Activated CD8-positive, alpha-beta T cell treated with anti-CD3 and anti-CD28 coated beads for 36 hours (primary cell): ENCODE measurements at regions of chr5 and their contacts with region 1.

Region 1: DNA sequence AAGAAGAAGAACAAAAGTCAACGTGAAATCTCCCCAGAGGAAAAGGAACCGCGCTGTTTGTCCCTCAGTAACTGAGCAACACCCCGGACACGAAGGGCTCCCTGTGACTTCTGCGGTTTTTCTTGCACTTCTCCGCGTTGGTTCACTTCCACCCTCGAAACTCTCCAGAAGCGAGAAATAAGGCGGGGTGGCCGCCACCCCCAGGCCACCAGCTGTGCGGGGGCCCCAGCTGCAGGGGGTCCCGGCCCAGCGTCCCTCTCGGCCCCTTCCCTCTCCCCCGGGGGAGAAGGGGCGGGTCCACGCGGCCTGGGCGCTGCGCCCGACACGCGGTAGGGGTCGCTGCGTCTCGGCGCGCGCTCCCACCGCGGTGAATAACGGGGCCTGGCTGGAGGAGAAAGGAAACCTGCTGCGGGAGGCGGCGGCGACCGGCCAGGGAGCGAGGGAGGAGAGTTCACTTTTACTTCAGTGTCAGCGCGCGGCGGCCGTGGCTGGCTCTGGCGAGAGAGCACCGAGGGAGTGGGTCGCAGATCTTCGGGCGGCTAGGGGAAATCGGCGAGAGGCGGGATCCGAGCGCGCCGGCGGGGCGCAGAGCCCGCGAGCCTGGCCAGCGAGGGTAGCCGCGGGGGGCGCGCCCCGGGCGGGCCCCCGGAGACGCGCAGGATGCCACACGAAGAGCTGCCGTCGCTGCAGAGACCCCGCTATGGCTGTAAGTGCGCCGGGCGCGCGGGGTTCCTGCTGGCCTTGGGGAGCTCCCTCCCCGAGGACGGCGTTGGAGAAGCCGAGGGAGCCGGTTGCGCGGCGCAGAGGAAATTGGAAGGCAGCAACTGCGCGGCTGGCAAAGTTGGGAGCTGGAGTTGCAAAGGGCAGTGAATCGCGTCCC is at the start of gene IQGAP2:
- DNase-seq: peak; percentile 84
- ATAC-seq: peak; percentile 63
- H3K4me3 Mint-ChIP-seq: peak within 1 kb of the TSS; percentile 87
- H3K27ac Mint-ChIP-seq: peak within 1 kb of the TSS; percentile 98
- H3K4me1 Mint-ChIP-seq: peaks cover 51% of the 10 kb centered on the region
- H3K27me3 Mint-ChIP-seq: no peaks in the 10 kb centered on the region
- CTCF ChIP-seq: peak; percentile 87
- total RNA-seq, gene IQGAP2: 37.7 to 39.1 TPM

Region 2: DNA sequence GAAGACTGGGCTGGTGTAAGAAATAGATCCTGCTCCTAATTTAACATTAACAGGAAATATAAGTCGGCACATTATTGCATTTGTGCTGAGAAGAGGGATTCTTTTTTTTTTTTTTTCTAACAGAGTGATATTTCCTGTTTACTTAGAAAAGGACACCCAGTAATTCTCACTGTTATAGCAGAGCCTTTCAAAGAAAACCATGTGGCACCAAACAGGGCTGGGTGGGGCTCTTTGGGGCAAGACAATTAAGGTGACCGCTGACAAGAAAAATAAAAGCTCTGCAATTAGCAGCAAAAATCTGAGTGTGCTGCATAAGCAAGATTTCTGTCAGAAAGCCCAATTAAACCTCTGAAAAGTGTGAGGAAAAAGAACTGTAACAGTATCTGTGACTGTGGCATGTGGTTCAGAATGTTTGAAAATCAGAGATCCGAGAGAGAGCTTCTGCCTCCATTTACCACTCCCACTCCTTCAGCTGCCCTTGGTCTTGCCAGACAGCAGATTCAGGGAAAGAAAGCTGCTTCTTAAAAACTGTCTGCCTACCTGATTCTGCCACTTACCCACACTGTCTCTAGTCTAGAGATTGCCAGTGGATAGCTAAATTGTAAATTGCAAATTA is 77.1 kb before region 1 on chr5:
- CTCF ChIA-PET with region 1: interaction called, 10 read pairs
- POLR2A ChIA-PET with region 1: interaction called, 7 read pairs
- intact Hi-C with region 1: loop called (anchors 5 kb)
- DNase-seq: peak; percentile 62
- ATAC-seq: peak; percentile 94
- H3K4me3 Mint-ChIP-seq: peak overlapping the region; percentile 34
- H3K27ac Mint-ChIP-seq: peak overlapping the region; percentile 90
- H3K4me1 Mint-ChIP-seq: peaks cover 48% of the 10 kb centered on the region
- H3K27me3 Mint-ChIP-seq: no peaks in the 10 kb centered on the region
- CTCF ChIP-seq: no peak

Region 3: DNA sequence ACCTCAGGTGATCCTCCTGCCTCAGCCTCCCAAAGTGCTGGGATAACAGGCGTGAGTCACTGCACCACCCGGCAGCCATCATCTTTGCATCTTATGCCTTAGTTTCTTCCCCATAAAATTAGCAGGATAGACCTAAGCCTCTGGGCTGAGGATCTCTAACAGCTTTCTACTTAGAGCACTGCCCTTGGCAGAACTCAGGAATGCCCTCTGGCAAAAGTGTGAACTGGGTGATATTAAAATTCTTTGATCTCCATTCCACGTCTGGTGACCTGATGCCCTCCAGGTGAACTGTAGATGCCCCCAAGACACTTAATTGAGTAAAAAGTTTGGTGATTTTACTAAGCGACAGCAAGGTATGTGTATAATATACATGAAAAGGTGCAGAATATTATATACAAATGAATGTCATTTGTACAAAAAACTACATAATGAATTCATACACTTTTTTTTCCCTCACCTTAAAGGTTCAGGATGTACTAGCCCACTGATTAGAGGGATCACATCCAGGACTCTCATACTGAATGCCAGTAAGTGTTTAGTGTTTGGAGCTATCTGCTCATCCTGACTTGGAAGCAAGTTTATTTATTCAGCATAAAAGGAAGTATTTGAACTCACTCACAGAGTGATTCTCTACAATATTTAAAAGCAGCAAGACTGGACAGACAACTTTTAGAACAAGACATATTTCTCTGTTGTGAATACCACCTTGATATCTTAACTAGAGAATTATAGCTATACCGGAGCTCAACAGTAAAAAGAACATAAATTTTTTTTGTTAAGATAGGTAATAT is 15.1 kb before region 1 on chr5:
- CTCF ChIA-PET with region 1: interaction called, 4 read pairs
- POLR2A ChIA-PET with region 1: interaction called, 16 read pairs
- intact Hi-C with region 1: no loop called
- DNase-seq: no peak
- ATAC-seq: no peak
- H3K4me3 Mint-ChIP-seq: no peak overlapping the region
- H3K27ac Mint-ChIP-seq: no peak overlapping the region
- H3K4me1 Mint-ChIP-seq: peaks cover 47% of the 10 kb centered on the region
- H3K27me3 Mint-ChIP-seq: no peaks in the 10 kb centered on the region
- CTCF ChIP-seq: no peak

Region 4: DNA sequence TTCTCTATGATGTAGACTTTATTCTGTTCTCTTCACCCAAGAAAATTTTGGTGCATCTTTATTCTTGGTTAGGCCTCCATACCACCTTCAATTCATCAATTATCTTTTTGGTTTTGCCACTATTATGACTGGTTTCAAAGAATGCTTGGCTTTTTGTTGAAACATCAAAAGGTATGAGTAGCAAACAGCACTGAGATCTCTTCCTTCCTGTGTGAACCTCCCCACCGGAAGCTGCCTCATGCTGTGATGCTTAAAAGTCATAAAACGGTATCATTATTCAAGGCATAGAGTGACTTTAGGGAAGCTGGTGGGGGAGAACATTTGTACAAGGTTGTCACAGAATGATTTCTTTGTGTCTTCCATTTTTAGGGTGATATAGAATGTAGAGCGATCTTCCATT is 70.5 kb after region 1 on chr5:
- CTCF ChIA-PET with region 1: interaction called, 5 read pairs
- POLR2A ChIA-PET with region 1: interaction called, 12 read pairs
- intact Hi-C with region 1: loop called (anchors 2 kb)
- DNase-seq: peak; percentile 85
- ATAC-seq: peak; percentile 89
- H3K4me3 Mint-ChIP-seq: peak overlapping the region; percentile 3
- H3K27ac Mint-ChIP-seq: peak overlapping the region; percentile 87
- H3K4me1 Mint-ChIP-seq: peaks cover 71% of the 10 kb centered on the region
- H3K27me3 Mint-ChIP-seq: no peaks in the 10 kb centered on the region
- CTCF ChIP-seq: no peak

Region 5: GRCh38 chr5:76582230-76583162 is 179.4 kb after region 1 on chr5:
- CTCF ChIA-PET with region 1: interaction called, 47 read pairs
- POLR2A ChIA-PET with region 1: interaction called, 5 read pairs
- intact Hi-C with region 1: no loop called
- DNase-seq: peak; percentile 17
- ATAC-seq: peak; percentile 81
- H3K4me3 Mint-ChIP-seq: no peak overlapping the region
- H3K27ac Mint-ChIP-seq: peak overlapping the region; percentile 17
- H3K4me1 Mint-ChIP-seq: peaks cover 19% of the 10 kb centered on the region
- H3K27me3 Mint-ChIP-seq: no peaks in the 10 kb centered on the region
- CTCF ChIP-seq: no peak